ENCODE measurements at regions of chr5 and their contacts with region 1.

Region 1: DNA sequence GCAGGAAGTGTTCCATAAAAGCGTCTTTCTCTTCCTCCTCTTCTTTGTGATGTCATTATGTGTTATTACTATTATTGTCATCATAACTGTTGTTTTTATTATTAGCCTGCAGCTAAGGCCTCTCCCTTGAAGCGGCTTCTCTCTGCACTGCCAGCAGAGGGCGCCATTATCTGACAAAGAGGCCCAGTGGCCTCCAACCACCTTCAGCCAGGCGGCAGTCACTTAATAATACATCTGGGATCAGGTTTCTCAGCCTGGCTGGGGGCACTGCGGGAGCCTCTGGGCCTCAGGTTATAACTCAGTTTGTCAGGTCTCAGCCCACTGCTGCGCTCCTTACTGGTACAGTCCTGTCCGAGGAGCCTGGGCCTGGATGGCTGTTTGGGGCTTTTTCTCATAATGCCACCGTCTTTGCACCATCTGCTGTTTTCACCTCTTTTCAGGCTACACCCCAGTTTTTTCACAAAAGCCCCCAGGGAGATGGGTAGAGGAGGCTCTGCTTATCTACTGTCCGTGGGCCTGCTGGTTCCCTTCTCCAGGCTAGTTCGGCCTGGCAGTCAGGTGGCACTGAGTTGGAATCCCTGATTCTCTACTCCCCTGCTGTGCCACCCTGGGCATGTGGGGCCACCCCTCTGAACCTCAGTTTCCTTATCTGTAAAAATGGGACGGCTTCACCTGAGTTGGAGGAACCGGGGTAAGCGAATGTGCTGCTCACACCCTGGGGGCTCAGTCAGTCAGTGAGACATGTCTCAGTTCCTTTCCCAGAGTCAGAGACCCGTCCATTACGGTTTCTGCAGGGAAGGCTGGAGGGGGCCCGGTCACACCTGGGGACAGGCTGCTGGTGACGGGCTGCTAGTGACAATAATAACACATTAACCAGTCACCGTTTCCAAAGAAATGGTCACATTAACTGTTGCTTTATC is 282.1 kb downstream of the NSG2 start:
- DNase-seq: peak; percentile 69
- ATAC-seq: peak; percentile 85
- H3K4me3 ChIP-seq: no peak overlapping the region
- H3K27ac ChIP-seq: peak overlapping the region; percentile 10; the same call in 1 of the 2 replicates
- H3K4me1 ChIP-seq: peaks cover 4% of the 10 kb centered on the region; the same call in 1 of the 2 replicates
- H3K27me3 ChIP-seq: no peaks in the 10 kb centered on the region; the same call in 1 of the 2 replicates
- CTCF ChIP-seq: peak; percentile 82
- POLR2A ChIP-seq: no peak
- RAD21 ChIP-seq: peak; percentile 73

Region 2: DNA sequence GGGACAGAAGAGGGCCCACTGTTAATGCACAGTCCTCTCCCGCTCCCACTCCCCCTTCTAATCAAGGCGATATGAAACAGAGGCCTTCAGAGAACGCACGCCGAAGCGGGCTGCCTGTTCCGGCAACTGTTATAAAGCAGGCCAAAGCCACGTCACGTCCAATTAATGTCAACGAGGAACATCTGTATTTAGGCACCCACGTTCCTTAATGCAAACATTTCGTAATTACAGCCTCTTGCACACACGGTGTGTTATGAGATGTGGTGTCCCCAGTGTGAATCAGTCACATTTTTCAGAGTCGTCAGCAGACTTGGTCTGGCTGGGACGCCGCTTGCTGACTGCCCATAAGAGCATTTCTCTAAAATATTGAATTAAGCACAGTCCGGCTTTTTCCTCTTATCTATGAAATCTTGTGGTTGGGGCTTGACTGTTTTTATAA is 57.0 kb after region 1 on chr5:
- CTCF ChIA-PET with region 1: no interaction called
- POLR2A ChIA-PET with region 1: no interaction called
- dilution Hi-C with region 1: no loop called
- in situ Hi-C with region 1: no loop called
- intact Hi-C with region 1: no loop called
- DNase-seq: peak; percentile 79
- ATAC-seq: peak; percentile 65
- H3K4me3 ChIP-seq: no peak overlapping the region
- H3K27ac ChIP-seq: peak overlapping the region; percentile 61; the same call in 1 of the 2 replicates
- H3K4me1 ChIP-seq: peaks cover 13% of the 10 kb centered on the region
- H3K27me3 ChIP-seq: no peaks in the 10 kb centered on the region; the same call in none of the 2 replicates
- CTCF ChIP-seq: no peak
- POLR2A ChIP-seq: no peak
- RAD21 ChIP-seq: no peak

Region 3: DNA sequence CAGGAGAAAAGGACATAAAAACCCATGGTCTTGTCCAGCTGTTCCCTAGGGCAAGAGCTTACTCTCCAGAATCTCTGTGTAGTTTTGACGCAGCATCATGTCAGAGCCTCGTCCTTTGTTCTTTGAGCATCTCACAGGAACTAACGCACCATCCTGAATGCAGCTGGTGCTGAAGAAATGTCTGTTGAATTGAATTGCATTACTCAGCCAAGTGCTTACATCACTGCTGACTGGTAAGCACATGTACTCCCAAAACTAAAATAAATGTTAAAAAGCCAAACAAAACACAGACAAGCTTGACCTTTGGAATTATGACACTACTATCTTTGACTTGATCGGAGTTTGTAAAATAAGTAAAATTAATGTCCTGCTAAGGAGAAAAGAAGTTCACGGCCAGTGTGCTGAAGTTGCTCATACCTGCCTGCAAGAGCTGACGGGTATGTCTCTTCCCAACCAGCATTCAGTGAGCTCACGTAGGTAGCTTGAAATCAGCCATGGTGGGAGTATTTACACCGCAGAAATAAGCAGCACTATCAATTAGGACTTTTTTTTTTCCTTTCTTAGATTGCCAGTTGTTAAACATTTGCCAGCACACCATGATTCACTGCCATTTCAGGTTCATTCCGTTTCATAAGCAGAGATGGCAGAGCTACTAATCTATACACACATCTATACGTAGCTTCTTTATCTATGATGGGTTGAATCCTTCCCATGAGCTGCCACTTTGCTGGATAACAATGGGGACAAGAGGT is 86.2 kb after region 1 on chr5:
- CTCF ChIA-PET with region 1: interaction called, 11 read pairs
- POLR2A ChIA-PET with region 1: no interaction called
- dilution Hi-C with region 1: no loop called
- in situ Hi-C with region 1: no loop called
- intact Hi-C with region 1: loop called (anchors 1 kb)
- DNase-seq: peak; percentile 84
- ATAC-seq: peak; percentile 87
- H3K4me3 ChIP-seq: no peak overlapping the region
- H3K27ac ChIP-seq: peak overlapping the region; percentile 24; the same call in 1 of the 2 replicates
- H3K4me1 ChIP-seq: peaks cover 2% of the 10 kb centered on the region; the same call in 1 of the 2 replicates
- H3K27me3 ChIP-seq: no peaks in the 10 kb centered on the region; the same call in none of the 2 replicates
- CTCF ChIP-seq: no peak
- POLR2A ChIP-seq: no peak
- RAD21 ChIP-seq: no peak

Region 4: GRCh38 chr5:174735498-174736330 is 408.1 kb after region 1 on chr5:
- CTCF ChIA-PET with region 1: interaction called, 3 read pairs
- POLR2A ChIA-PET with region 1: no interaction called
- dilution Hi-C with region 1: no loop called
- in situ Hi-C with region 1: no loop called
- intact Hi-C with region 1: loop called (anchors 1 kb)
- DNase-seq: no peak
- ATAC-seq: peak; percentile 51
- H3K4me3 ChIP-seq: peak overlapping the region; percentile 2; the same call in 1 of the 2 replicates
- H3K27ac ChIP-seq: peak overlapping the region; percentile 36
- H3K4me1 ChIP-seq: peaks cover 6% of the 10 kb centered on the region
- H3K27me3 ChIP-seq: peaks cover 27% of the 10 kb centered on the region
- CTCF ChIP-seq: peak; percentile 39
- POLR2A ChIP-seq: no peak
- RAD21 ChIP-seq: peak; percentile 61

Region 5: GRCh38 chr5:174760721-174761120 is 433.1 kb after region 1 on chr5:
- CTCF ChIA-PET with region 1: no interaction called
- POLR2A ChIA-PET with region 1: no interaction called
- dilution Hi-C with region 1: no loop called
- in situ Hi-C with region 1: no loop called
- intact Hi-C with region 1: no loop called
- DNase-seq: no peak
- ATAC-seq: no peak
- H3K4me3 ChIP-seq: no peak overlapping the region
- H3K27ac ChIP-seq: no peak overlapping the region
- H3K4me1 ChIP-seq: no peaks in the 10 kb centered on the region
- H3K27me3 ChIP-seq: peaks cover 5% of the 10 kb centered on the region
- CTCF ChIP-seq: no peak
- POLR2A ChIP-seq: no peak
- RAD21 ChIP-seq: no peak